ENCODE measurements at regions of chr1 and their contacts with region 1.

Region 1: GRCh38 chr1:86913896-86914634 is at the start of gene SELENOF:
- DNase-seq: peak; percentile 100
- ATAC-seq: peak; percentile 88
- H3K4me3 ChIP-seq: peak within 1 kb of the TSS; percentile 100
- H3K27ac ChIP-seq: peak within 1 kb of the TSS; percentile 92
- H3K4me1 ChIP-seq: no peaks in the 10 kb centered on the region
- H3K27me3 ChIP-seq: no peaks in the 10 kb centered on the region
- CTCF ChIP-seq: no peak
- EP300 ChIP-seq: no peak
- POLR2A ChIP-seq: peak; percentile 90
- RAD21 ChIP-seq: no peak
- polyA plus RNA-seq, gene SELENOF: 226 to 254 TPM

Region 2: DNA sequence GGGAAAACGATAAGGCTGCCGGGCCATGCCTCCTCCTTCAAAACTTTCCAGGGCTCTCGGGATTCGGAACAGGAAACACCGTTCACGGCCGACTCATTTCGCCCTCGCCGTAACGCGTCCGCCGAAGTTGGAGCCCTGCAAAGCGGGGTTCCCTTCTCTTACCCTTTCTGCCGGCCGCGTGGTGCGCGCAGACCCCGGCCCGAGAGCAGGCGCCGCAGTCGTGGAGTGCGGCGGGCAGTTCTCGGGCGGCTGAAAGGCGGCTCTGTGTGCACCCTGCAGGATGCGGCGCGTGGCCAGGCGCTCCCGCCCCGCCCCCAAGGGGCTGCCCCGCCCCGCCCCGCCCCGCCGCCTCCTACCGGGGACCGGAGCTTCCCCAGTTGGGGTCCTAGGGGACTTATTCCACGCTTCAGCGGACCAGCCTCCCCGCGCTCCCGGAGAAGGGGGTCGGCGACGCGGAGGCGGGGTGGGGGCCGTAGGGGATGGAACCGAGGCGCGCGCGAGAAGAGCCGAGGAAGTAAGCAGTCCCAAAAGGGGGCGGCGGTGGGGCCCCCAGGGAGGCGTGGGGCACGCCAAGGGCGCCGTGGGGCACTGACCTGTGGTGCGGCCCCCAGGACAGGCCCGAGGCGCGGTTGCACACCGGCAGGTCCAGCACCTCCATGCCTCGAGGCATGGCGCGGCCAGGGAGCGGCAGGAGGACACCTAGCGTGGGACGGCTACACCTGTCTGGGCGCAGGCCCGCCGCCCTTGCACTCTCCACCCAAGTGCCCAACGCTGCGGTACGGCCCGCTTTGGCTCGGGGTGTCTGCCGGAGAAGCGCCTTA is 1917.0 kb before region 1 on chr1 and contains the start of gene MCOLN2:
- CTCF ChIA-PET with region 1: no interaction called
- POLR2A ChIA-PET with region 1: no interaction called
- RAD21 ChIA-PET with region 1: no interaction called
- SMC1A ChIA-PET with region 1: no interaction called
- in situ Hi-C with region 1: loop called (anchors 25 kb)
- intact Hi-C with region 1: no loop called
- DNase-seq: no peak
- ATAC-seq: peak; percentile 71
- H3K4me3 ChIP-seq: peak within 1 kb of the TSS; percentile 95
- H3K27ac ChIP-seq: peak within 1 kb of the TSS; percentile 99
- H3K4me1 ChIP-seq: 0 out of 2 replicates have a peak, but pooled peaks cover 4% of the 10 kb centered on the region
- H3K27me3 ChIP-seq: no peaks in the 10 kb centered on the region
- CTCF ChIP-seq: 0 out of 6 replicates have a peak, but pooled peaks of 1 of the 3 experiments have one; percentile 4
- EP300 ChIP-seq: no peak
- POLR2A ChIP-seq: peak; percentile 86
- RAD21 ChIP-seq: no peak
- polyA plus RNA-seq, gene MCOLN2: 25.9 to 46.7 TPM

Region 3: DNA sequence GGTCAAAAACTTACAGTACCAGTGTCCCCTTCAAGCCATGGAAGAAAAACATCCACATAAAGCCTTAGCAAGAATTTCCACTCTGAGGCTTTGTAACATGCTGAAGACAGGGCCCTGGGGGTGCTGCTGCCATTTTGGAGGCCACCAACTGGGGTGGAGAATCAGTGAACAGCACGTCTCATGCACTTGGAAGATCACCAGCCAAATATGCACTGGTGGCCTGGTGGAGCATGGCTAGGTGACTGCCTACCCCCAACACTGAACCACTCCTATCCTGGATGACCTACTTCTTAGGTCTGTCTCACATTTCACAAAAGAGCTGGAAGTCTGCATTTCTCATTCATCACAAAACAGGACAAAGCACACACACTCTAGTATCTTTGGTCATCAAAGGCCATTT is 883.9 kb before region 1 on chr1:
- CTCF ChIA-PET with region 1: no interaction called
- POLR2A ChIA-PET with region 1: no interaction called
- RAD21 ChIA-PET with region 1: no interaction called
- SMC1A ChIA-PET with region 1: no interaction called
- in situ Hi-C with region 1: no loop called
- intact Hi-C with region 1: no loop called
- DNase-seq: no peak
- ATAC-seq: no peak
- H3K4me3 ChIP-seq: no peak overlapping the region
- H3K27ac ChIP-seq: no peak overlapping the region
- H3K4me1 ChIP-seq: no peaks in the 10 kb centered on the region
- H3K27me3 ChIP-seq: no peaks in the 10 kb centered on the region
- CTCF ChIP-seq: no peak
- EP300 ChIP-seq: no peak
- POLR2A ChIP-seq: no peak
- RAD21 ChIP-seq: no peak

Region 4: GRCh38 chr1:86887479-86888162 is 26.4 kb before region 1 on chr1:
- CTCF ChIA-PET with region 1: interaction called, 3 read pairs
- POLR2A ChIA-PET with region 1: interaction called, 3 read pairs
- RAD21 ChIA-PET with region 1: interaction called, 17 read pairs
- SMC1A ChIA-PET with region 1: interaction called, 6 read pairs
- in situ Hi-C with region 1: no loop called
- intact Hi-C with region 1: no loop called
- DNase-seq: no peak
- ATAC-seq: peak; percentile 76
- H3K4me3 ChIP-seq: no peak overlapping the region
- H3K27ac ChIP-seq: no peak overlapping the region
- H3K4me1 ChIP-seq: peaks cover 5% of the 10 kb centered on the region; the same call in 1 of the 2 replicates
- H3K27me3 ChIP-seq: no peaks in the 10 kb centered on the region
- CTCF ChIP-seq: no peak
- EP300 ChIP-seq: no peak
- POLR2A ChIP-seq: no peak
- RAD21 ChIP-seq: no peak

Region 5: GRCh38 chr1:86933562-86934377 is 19.7 kb after region 1 on chr1:
- CTCF ChIA-PET with region 1: interaction called, 12 read pairs
- POLR2A ChIA-PET with region 1: interaction called, 14 read pairs
- RAD21 ChIA-PET with region 1: interaction called, 18 read pairs
- SMC1A ChIA-PET with region 1: interaction called, 23 read pairs
- in situ Hi-C with region 1: no loop called
- intact Hi-C with region 1: no loop called
- DNase-seq: no peak
- ATAC-seq: peak; percentile 38; the same call in 1 of the 3 replicates
- H3K4me3 ChIP-seq: no peak overlapping the region
- H3K27ac ChIP-seq: no peak overlapping the region
- H3K4me1 ChIP-seq: no peaks in the 10 kb centered on the region
- H3K27me3 ChIP-seq: no peaks in the 10 kb centered on the region
- CTCF ChIP-seq: no peak
- EP300 ChIP-seq: no peak
- POLR2A ChIP-seq: no peak
- RAD21 ChIP-seq: no peak

Region 6: GRCh38 chr1:87045761-87046304 is 131.8 kb after region 1 on chr1:
- CTCF ChIA-PET with region 1: interaction called, 4 read pairs
- POLR2A ChIA-PET with region 1: interaction called, 18 read pairs
- RAD21 ChIA-PET with region 1: interaction called, 9 read pairs
- SMC1A ChIA-PET with region 1: interaction called, 23 read pairs
- in situ Hi-C with region 1: loop called (anchors 10 kb)
- intact Hi-C with region 1: no loop called
- DNase-seq: no peak
- ATAC-seq: peak; percentile 78
- H3K4me3 ChIP-seq: no peak overlapping the region
- H3K27ac ChIP-seq: peak overlapping the region; percentile 41
- H3K4me1 ChIP-seq: peaks cover 14% of the 10 kb centered on the region
- H3K27me3 ChIP-seq: no peaks in the 10 kb centered on the region
- CTCF ChIP-seq: no peak
- EP300 ChIP-seq: no peak
- POLR2A ChIP-seq: no peak
- RAD21 ChIP-seq: no peak

Region 7: GRCh38 chr1:87061742-87062156 is 147.7 kb after region 1 on chr1:
- CTCF ChIA-PET with region 1: interaction called, 3 read pairs
- POLR2A ChIA-PET with region 1: interaction called, 34 read pairs
- RAD21 ChIA-PET with region 1: interaction called, 27 read pairs
- SMC1A ChIA-PET with region 1: interaction called, 20 read pairs
- in situ Hi-C with region 1: loop called (anchors 10 kb)
- intact Hi-C with region 1: loop called (anchors 2 kb)
- DNase-seq: peak; percentile 66
- ATAC-seq: peak; percentile 58
- H3K4me3 ChIP-seq: no peak overlapping the region
- H3K27ac ChIP-seq: peak overlapping the region; percentile 5
- H3K4me1 ChIP-seq: peaks cover 30% of the 10 kb centered on the region
- H3K27me3 ChIP-seq: no peaks in the 10 kb centered on the region
- CTCF ChIP-seq: no peak
- EP300 ChIP-seq: 0 out of 4 replicates have a peak, but pooled peaks of 1 of the 2 experiments have one; percentile 40
- POLR2A ChIP-seq: no peak
- RAD21 ChIP-seq: no peak

Region 8: GRCh38 chr1:87464022-87464490 is 550.0 kb after region 1 on chr1:
- CTCF ChIA-PET with region 1: no interaction called
- POLR2A ChIA-PET with region 1: no interaction called
- RAD21 ChIA-PET with region 1: no interaction called
- SMC1A ChIA-PET with region 1: no interaction called
- in situ Hi-C with region 1: no loop called
- intact Hi-C with region 1: no loop called
- DNase-seq: peak; percentile 37
- ATAC-seq: peak; percentile 89
- H3K4me3 ChIP-seq: no peak overlapping the region
- H3K27ac ChIP-seq: no peak overlapping the region
- H3K4me1 ChIP-seq: peaks cover 5% of the 10 kb centered on the region; the same call in 1 of the 2 replicates
- H3K27me3 ChIP-seq: no peaks in the 10 kb centered on the region
- CTCF ChIP-seq: no peak
- EP300 ChIP-seq: peak in 1 of 2 experiments; percentile 62; a peak in 3 of 4 replicates
- POLR2A ChIP-seq: no peak
- RAD21 ChIP-seq: no peak

Region 9: DNA sequence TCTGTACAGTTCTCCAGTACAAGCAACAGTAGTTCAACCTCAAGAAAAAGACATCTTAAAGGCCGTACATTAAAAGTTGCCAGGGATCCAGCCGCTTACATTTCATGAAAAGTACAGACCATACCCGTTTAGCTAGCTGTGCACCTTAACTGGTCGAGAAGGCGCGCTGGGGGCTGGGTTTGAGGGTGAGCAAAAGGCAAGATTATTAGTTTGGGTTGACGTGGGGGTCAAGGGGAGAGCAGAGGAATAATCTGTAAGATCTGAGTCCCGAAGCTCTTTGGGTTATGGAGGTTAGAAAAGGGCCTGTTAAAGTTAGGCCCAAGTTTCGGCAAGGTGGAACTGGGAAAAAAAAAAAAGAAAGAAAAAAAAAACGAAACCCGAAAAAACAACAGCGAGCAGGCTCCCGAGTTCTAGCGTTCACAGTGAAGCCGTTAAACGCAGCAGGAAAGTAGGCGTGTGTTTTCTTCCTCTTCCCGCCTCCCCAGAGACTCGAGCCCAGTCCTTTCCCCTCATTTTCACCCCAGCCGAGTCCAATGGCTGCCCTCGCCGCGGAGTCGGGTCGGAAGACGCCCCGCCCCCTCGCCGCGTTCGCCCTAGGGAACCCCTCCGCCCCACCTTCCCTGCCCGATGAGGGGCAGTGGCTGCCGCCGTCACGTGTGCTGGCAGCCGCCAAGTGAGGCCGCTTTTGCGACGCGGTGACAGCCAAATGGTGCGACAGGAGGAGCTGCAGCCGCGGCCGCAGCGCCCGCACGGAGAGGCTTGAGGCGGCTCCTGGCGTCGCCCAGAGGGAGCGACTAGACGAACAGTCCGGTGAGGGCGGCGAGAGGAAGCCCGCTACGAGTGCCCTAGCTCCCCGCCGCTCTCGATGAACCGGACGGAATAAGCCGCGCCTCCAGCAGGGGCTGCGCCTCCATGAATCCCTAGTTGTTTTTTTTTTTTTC is 1769.7 kb after region 1 on chr1 and contains the start of gene PKN2:
- CTCF ChIA-PET with region 1: no interaction called
- POLR2A ChIA-PET with region 1: no interaction called
- RAD21 ChIA-PET with region 1: no interaction called
- SMC1A ChIA-PET with region 1: no interaction called
- in situ Hi-C with region 1: loop called (anchors 25 kb)
- intact Hi-C with region 1: no loop called
- DNase-seq: peak; percentile 92
- ATAC-seq: peak; percentile 91
- H3K4me3 ChIP-seq: peak within 1 kb of the TSS; percentile 95
- H3K27ac ChIP-seq: peak within 1 kb of the TSS; percentile 93
- H3K4me1 ChIP-seq: no peaks in the 10 kb centered on the region
- H3K27me3 ChIP-seq: no peaks in the 10 kb centered on the region
- CTCF ChIP-seq: peak; percentile 10 to 35 (median 23); a peak in 3 of 6 replicates
- EP300 ChIP-seq: peak; percentile 30 to 62; a peak in 2 of 4 replicates
- POLR2A ChIP-seq: peak; percentile 95
- RAD21 ChIP-seq: no peak
- polyA plus RNA-seq, gene PKN2: 2.6 to 3.8 TPM